PC-9 (cell line): ENCODE measurements at regions of chr3 and their contacts with region 1.

Region 1: GRCh38 chr3:55562431-55563099 is 75.5 kb upstream of the WNT5A start:
- DNase-seq: peak in 1 of 2 experiments; percentile 58
- H3K4me3 ChIP-seq: no peak overlapping the region
- H3K27ac ChIP-seq: no peak overlapping the region
- H3K4me1 ChIP-seq: no peaks in the 10 kb centered on the region
- H3K27me3 ChIP-seq: no peaks in the 10 kb centered on the region
- CTCF ChIP-seq: no peak

Region 2: GRCh38 chr3:55362210-55362960 is 200.2 kb before region 1 on chr3:
- CTCF ChIA-PET with region 1: no interaction called
- POLR2A ChIA-PET with region 1: no interaction called
- intact Hi-C with region 1: no loop called
- DNase-seq: peak; percentile 23 to 85
- H3K4me3 ChIP-seq: no peak overlapping the region
- H3K27ac ChIP-seq: peak overlapping the region; percentile 60
- H3K4me1 ChIP-seq: peaks cover 29% of the 10 kb centered on the region
- H3K27me3 ChIP-seq: no peaks in the 10 kb centered on the region
- CTCF ChIP-seq: no peak

Region 3: GRCh38 chr3:55524565-55525244 is 37.9 kb before region 1 on chr3:
- CTCF ChIA-PET with region 1: no interaction called
- POLR2A ChIA-PET with region 1: interaction called, 5 read pairs
- intact Hi-C with region 1: loop called (anchors 1 kb)
- DNase-seq: peak; percentile 55 to 76
- H3K4me3 ChIP-seq: no peak overlapping the region
- H3K27ac ChIP-seq: peak overlapping the region; percentile 67
- H3K4me1 ChIP-seq: peaks cover 27% of the 10 kb centered on the region
- H3K27me3 ChIP-seq: no peaks in the 10 kb centered on the region
- CTCF ChIP-seq: no peak

Region 4: DNA sequence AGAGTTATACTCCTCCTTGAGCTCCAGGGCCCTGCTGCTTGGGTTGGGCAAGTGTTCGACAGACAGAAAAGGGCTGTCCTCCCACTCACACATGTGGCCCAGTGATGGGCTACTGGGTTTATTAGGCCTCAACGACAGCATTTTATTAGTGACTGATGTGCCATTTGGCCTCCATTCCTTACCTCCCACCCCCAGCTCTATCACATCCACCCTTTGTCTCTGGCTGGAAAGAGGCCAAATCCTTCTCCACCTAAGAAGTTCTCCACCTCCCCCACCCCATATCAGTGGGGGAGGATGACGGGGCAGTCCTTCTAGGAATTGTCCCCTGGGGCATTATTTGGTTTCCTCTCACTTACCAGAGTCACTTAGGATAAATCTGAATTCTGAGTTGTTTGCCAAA is 18.3 kb before region 1 on chr3:
- CTCF ChIA-PET with region 1: no interaction called
- POLR2A ChIA-PET with region 1: no interaction called
- intact Hi-C with region 1: no loop called
- DNase-seq: no peak
- H3K4me3 ChIP-seq: no peak overlapping the region
- H3K27ac ChIP-seq: no peak overlapping the region
- H3K4me1 ChIP-seq: no peaks in the 10 kb centered on the region
- H3K27me3 ChIP-seq: no peaks in the 10 kb centered on the region
- CTCF ChIP-seq: no peak

Region 5: GRCh38 chr3:55591888-55592287 is 29.3 kb after region 1 on chr3:
- CTCF ChIA-PET with region 1: no interaction called
- POLR2A ChIA-PET with region 1: interaction called, 19 read pairs
- intact Hi-C with region 1: no loop called
- DNase-seq: no peak
- H3K4me3 ChIP-seq: no peak overlapping the region
- H3K27ac ChIP-seq: peak overlapping the region; percentile 85
- H3K4me1 ChIP-seq: peaks cover 66% of the 10 kb centered on the region
- H3K27me3 ChIP-seq: no peaks in the 10 kb centered on the region
- CTCF ChIP-seq: no peak